ENCODE measurements at regions of chr1 and their contacts with region 1.

Region 1: DNA sequence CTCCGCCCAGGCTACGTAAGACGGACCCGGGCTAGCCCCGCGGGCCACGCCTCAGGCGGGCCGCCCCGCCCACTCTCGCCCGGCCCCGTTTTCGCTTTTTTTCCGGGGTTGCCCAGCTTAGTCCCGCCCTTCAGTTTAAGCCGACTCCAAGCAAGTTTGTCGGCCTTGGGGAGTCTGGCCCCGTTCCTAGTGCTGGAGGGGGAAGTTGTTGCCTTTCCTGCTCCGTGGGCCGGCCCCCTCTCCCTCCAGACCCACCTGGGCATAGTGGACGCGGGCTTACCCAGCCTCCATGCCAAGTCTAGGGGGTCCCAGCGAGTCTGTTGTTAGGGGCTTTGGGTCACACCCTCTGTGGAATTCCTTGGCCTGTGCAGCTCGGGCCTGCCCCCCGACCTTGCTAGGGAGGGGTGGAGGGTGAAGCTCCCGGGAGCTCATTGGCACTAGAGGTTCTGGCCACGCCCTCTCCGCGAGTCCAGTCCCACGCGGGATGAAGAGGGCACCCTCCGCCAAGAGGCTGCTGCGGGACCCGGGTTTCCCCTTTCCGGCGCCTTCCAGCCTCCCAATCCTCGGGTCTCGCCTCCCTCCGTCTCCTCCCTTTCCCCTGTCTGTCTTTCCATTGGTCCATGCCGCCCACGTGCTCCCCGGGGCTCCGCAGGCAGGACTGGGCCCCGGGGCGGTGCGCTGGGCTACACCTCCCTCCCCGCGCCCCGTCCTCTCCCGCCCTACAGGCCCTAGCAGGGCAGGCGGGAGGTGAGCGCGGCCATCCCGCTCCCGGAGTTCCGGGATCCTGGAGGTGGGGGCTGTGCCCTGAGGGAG is 3.3 kb downstream of the RUSC1 start:
- DNase-seq: peak; percentile 75 to 95 (median 80)
- ATAC-seq: peak; percentile 86
- H3K4me3 ChIP-seq: peak overlapping the region; percentile 100
- H3K4me3 Mint-ChIP-seq: peak overlapping the region; percentile 80 to 91 (median 89)
- H3K27ac ChIP-seq: peak overlapping the region; percentile 90
- H3K27ac Mint-ChIP-seq: peak overlapping the region; percentile 44 to 86 (median 73)
- H3K4me1 ChIP-seq: peaks cover 0 to 12% of the 10 kb centered on the region in 2 donors
- H3K4me1 Mint-ChIP-seq: peaks cover 24 to 38% (median 31%) of the 10 kb centered on the region in 7 donors
- H3K27me3 ChIP-seq: no peaks in the 10 kb centered on the region
- H3K27me3 Mint-ChIP-seq: no peaks in the 10 kb centered on the region

Region 2: DNA sequence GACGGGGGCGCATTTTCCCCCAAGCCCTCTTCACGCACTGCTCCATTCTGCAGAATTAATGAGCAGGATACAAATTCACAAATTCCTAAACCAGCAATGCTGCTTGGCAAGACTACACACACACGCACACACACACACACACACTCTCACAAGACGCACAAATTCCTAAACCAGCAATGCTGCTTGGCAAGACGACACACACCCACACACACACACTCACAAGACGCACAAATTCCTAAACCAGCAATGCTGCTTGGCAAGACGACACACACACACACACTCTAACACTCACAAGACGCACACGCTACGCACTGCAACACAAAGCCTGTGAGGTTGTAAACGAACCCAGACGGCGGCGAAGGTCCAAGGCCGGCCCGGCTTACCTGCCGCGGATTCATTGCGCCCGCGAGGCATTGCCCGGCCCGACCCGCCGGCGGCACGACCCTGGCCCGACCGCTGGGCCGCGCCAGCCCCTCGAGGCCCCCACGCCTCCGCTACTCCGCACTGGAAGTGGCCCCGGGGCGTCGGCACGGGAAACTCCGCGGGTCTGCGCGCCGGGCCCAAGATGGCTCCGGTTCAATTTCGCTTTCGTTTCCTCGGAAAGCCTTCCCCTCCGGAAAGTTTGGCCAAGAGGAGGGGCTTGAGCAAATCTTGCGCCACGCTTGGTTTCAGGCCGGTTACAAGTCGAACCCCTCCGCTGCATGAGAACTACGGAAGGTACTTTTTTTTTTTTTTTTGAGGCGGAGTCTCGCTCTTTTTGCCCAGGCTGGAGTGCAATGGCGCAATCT is 716.2 kb before region 1 on chr1 and contains the start of gene ADAR:
- CTCF ChIA-PET with region 1: no interaction called
- POLR2A ChIA-PET with region 1: no interaction called
- intact Hi-C with region 1: no loop called
- DNase-seq: peak; percentile 67 to 95 (median 90)
- ATAC-seq: peak; percentile 92
- H3K4me3 ChIP-seq: peak within 1 kb of the TSS; percentile 78
- H3K4me3 Mint-ChIP-seq: peak within 1 kb of the TSS; percentile 91 to 100 (median 98)
- H3K27ac ChIP-seq: peak within 1 kb of the TSS; percentile 97
- H3K27ac Mint-ChIP-seq: peak within 1 kb of the TSS; percentile 94 to 99 (median 99)
- H3K4me1 ChIP-seq: peaks cover 40 to 42% of the 10 kb centered on the region in 2 donors
- H3K4me1 Mint-ChIP-seq: peaks cover 63 to 90% (median 75%) of the 10 kb centered on the region in 7 donors
- H3K27me3 ChIP-seq: no peaks in the 10 kb centered on the region
- H3K27me3 Mint-ChIP-seq: no peaks in the 10 kb centered on the region
- total RNA-seq, gene ADAR: 206 to 408 (median 237) TPM

Region 3: DNA sequence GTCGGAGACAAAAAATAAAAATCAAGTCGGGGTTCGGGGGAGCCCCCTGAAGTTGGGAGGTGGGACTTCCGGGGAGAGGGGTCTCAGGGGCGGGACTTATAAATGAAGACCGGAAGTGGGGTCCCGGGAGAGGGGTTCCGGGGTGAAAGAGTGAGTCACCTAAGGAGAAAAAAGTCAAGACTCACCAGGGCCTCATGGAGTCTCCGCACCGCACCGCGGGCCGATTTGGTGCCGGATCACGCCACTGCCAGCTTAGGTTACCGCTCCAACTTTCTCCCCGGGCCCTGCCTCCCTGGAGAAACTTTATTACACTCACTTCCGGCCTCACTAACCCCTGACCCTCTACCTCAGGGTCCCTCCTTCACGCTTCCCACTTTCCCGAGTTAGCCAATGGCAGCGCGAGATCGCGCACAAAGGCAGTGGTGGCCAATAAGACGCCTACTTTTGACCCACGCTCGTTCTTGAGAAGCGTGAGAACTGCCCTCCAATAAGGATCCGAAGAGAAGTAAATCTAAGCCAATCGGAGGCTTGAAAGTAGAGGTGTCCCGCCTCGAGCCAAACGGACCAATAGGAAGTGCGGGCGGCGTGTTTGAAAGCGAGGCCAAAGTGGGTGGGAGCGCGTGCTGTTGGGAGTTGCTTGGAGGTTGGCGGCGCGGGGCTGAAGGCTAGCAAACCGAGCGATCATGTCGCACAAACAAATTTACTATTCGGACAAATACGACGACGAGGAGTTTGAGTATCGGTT is 349.8 kb before region 1 on chr1 and contains the start of gene CKS1B:
- CTCF ChIA-PET with region 1: no interaction called
- POLR2A ChIA-PET with region 1: no interaction called
- intact Hi-C with region 1: loop called in 1 of 2 experiments (anchors 10 kb)
- DNase-seq: peak; percentile 86 to 100 (median 98)
- ATAC-seq: peak; percentile 89
- H3K4me3 ChIP-seq: peak within 1 kb of the TSS; percentile 82
- H3K4me3 Mint-ChIP-seq: no peak within 1 kb of the TSS
- H3K27ac ChIP-seq: peak within 1 kb of the TSS; percentile 94
- H3K27ac Mint-ChIP-seq: no peak within 1 kb of the TSS
- H3K4me1 ChIP-seq: peaks cover 28 to 35% of the 10 kb centered on the region in 2 donors
- H3K4me1 Mint-ChIP-seq: peaks cover 27 to 39% (median 31%) of the 10 kb centered on the region in 7 donors
- H3K27me3 ChIP-seq: no peaks in the 10 kb centered on the region
- H3K27me3 Mint-ChIP-seq: no peaks in the 10 kb centered on the region
- total RNA-seq, gene CKS1B: 8.4 to 105 (median 10.2) TPM

Region 4: GRCh38 chr1:155172732-155173477 is 151.1 kb before region 1 on chr1 and contains the start of gene KRTCAP2:
- CTCF ChIA-PET with region 1: no interaction called
- POLR2A ChIA-PET with region 1: no interaction called
- intact Hi-C with region 1: loop called in 1 of 2 experiments (anchors 5 kb)
- DNase-seq: peak; percentile 89 to 93 (median 92)
- ATAC-seq: peak; percentile 91
- H3K4me3 ChIP-seq: peak within 1 kb of the TSS; percentile 90
- H3K4me3 Mint-ChIP-seq: peak within 1 kb of the TSS; percentile 94 to 100 (median 98)
- H3K27ac ChIP-seq: peak within 1 kb of the TSS; percentile 88
- H3K27ac Mint-ChIP-seq: peak within 1 kb of the TSS; percentile 95 to 99 (median 98)
- H3K4me1 ChIP-seq: peaks cover 11 to 18% of the 10 kb centered on the region in 2 donors
- H3K4me1 Mint-ChIP-seq: peaks cover 32 to 60% (median 47%) of the 10 kb centered on the region in 7 donors
- H3K27me3 ChIP-seq: no peaks in the 10 kb centered on the region
- H3K27me3 Mint-ChIP-seq: peaks cover 0 to 6% (median 0%) of the 10 kb centered on the region in 5 donors
- total RNA-seq, gene KRTCAP2: 97.4 to 236 (median 155) TPM

Region 5: GRCh38 chr1:155244368-155245162 is 79.4 kb before region 1 on chr1:
- CTCF ChIA-PET with region 1: interaction called, 105 read pairs
- POLR2A ChIA-PET with region 1: interaction called, 18 read pairs
- intact Hi-C with region 1: loop called in 1 of 2 experiments (anchors 1 kb)
- DNase-seq: peak; percentile 76 to 96 (median 94)
- ATAC-seq: peak; percentile 92
- H3K4me3 ChIP-seq: peak overlapping the region; percentile 63
- H3K4me3 Mint-ChIP-seq: peak overlapping the region; percentile 84 to 97 (median 91)
- H3K27ac ChIP-seq: peak overlapping the region; percentile 73
- H3K27ac Mint-ChIP-seq: peak overlapping the region; percentile 94 to 100 (median 98)
- H3K4me1 ChIP-seq: peaks cover 19 to 20% of the 10 kb centered on the region in 2 donors
- H3K4me1 Mint-ChIP-seq: peaks cover 31 to 50% (median 44%) of the 10 kb centered on the region in 7 donors
- H3K27me3 ChIP-seq: no peaks in the 10 kb centered on the region
- H3K27me3 Mint-ChIP-seq: peaks cover 0 to 6% (median 3%) of the 10 kb centered on the region in 5 donors

Region 6: DNA sequence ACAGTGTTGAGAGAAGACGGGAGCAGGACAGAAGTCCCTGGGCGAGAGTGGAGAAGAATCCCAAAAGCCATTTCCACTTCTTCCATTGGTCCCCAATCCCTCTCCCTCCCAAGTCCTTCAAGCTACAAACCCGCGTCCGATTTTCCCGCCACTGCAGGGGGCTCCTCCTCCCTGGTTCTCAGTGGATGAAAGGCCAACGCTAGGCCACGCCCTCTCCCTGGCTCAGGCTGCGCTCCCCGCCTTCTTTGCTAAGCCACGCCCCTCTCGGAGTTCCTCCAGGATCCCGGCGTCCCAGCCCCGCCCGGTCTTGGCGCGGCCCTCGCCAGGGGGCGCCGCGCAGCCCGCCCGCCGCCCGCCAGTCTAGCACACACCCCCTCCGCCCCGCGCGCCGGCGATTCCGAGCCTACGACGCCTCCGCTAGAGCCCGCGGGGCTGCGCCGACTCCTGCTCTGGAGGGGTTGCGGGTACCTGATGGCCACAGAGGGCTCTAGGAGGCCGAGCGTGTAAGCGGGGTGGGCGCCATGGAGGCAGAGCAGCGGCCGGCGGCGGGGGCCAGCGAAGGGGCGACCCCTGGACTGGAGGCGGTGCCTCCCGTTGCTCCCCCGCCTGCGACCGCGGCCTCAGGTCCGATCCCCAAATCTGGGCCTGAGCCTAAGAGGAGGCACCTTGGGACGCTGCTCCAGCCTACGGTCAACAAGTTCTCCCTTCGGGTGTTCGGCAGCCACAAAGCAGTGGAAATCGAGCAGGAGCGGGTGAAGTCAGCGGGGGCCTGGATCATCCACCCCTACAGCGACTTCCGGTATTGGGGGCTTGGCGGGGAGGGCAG is 46.7 kb before region 1 on chr1 and contains the start of gene HCN3:
- CTCF ChIA-PET with region 1: interaction called, 6 read pairs
- POLR2A ChIA-PET with region 1: interaction called, 11 read pairs
- intact Hi-C with region 1: loop called (anchors 1 kb)
- DNase-seq: peak; percentile 68 to 95 (median 70)
- ATAC-seq: peak; percentile 71
- H3K4me3 ChIP-seq: peak within 1 kb of the TSS; percentile 59
- H3K4me3 Mint-ChIP-seq: peak within 1 kb of the TSS; percentile 75 to 90 (median 86)
- H3K27ac ChIP-seq: peak within 1 kb of the TSS; percentile 36
- H3K27ac Mint-ChIP-seq: peak within 1 kb of the TSS in 8 of 9 donors; percentile 44 to 83 (median 69)
- H3K4me1 ChIP-seq: peaks cover 18 to 19% of the 10 kb centered on the region in 2 donors
- H3K4me1 Mint-ChIP-seq: peaks cover 24 to 47% (median 38%) of the 10 kb centered on the region in 7 donors
- H3K27me3 ChIP-seq: no peaks in the 10 kb centered on the region
- H3K27me3 Mint-ChIP-seq: peaks cover 0 to 11% (median 0%) of the 10 kb centered on the region in 5 donors
- total RNA-seq, gene HCN3: 1.6 to 3.3 (median 2.8) TPM

Region 7: GRCh38 chr1:155300553-155301329 is 23.3 kb before region 1 on chr1:
- CTCF ChIA-PET with region 1: no interaction called
- POLR2A ChIA-PET with region 1: no interaction called
- intact Hi-C with region 1: no loop called
- DNase-seq: no peak
- ATAC-seq: no peak
- H3K4me3 ChIP-seq: no peak overlapping the region
- H3K4me3 Mint-ChIP-seq: no peak overlapping the region
- H3K27ac ChIP-seq: no peak overlapping the region
- H3K27ac Mint-ChIP-seq: no peak overlapping the region
- H3K4me1 ChIP-seq: no peaks in the 10 kb centered on the region
- H3K4me1 Mint-ChIP-seq: peaks cover 0 to 9% (median 2%) of the 10 kb centered on the region in 7 donors
- H3K27me3 ChIP-seq: no peaks in the 10 kb centered on the region
- H3K27me3 Mint-ChIP-seq: peaks cover 15 to 30% (median 23%) of the 10 kb centered on the region in 5 donors

Region 8: DNA sequence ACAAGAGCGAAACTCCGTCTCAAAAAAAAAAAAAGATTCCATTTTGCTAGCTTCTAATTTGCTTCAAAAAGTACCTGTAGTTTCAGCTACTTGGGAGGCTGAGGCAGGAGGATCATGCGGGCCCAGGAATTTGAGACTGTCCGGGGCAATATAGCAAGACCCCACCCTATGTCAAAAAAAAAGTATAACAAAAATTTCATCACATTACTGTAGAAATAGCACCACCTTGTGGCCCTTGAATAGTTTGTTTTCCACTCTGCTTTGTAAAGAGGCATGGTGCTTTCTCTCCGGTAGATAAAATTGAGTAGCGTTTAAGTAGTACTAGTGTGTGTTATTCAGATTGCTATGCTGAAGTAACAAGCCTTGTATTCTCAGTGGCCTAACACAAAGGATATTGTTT is 267.8 kb after region 1 on chr1:
- CTCF ChIA-PET with region 1: no interaction called
- POLR2A ChIA-PET with region 1: no interaction called
- intact Hi-C with region 1: loop called in 1 of 2 experiments (anchors 5 kb)
- DNase-seq: peak in 7 of 9 donors; percentile 42 to 71 (median 57)
- ATAC-seq: peak; percentile 85
- H3K4me3 ChIP-seq: no peak overlapping the region
- H3K4me3 Mint-ChIP-seq: no peak overlapping the region
- H3K27ac ChIP-seq: no peak overlapping the region
- H3K27ac Mint-ChIP-seq: peak overlapping the region in 1 of 9 donors; percentile 62
- H3K4me1 ChIP-seq: no peaks in the 10 kb centered on the region
- H3K4me1 Mint-ChIP-seq: peaks cover 0 to 4% (median 3%) of the 10 kb centered on the region in 7 donors
- H3K27me3 ChIP-seq: no peaks in the 10 kb centered on the region
- H3K27me3 Mint-ChIP-seq: no peaks in the 10 kb centered on the region

Region 9: GRCh38 chr1:156338180-156338973 is 1014.4 kb after region 1 on chr1 and contains the starts of genes CCT3 and TSACC:
- CTCF ChIA-PET with region 1: no interaction called
- POLR2A ChIA-PET with region 1: no interaction called
- intact Hi-C with region 1: loop called in 1 of 2 experiments (anchors 2 kb)
- DNase-seq: peak; percentile 99 to 100 (median 100)
- ATAC-seq: peak; percentile 97
- H3K4me3 ChIP-seq: peak within 1 kb of the TSS; percentile 83
- H3K4me3 Mint-ChIP-seq: peak within 1 kb of the TSS; percentile 97 to 99 (median 99)
- H3K27ac ChIP-seq: peak within 1 kb of the TSS; percentile 76
- H3K27ac Mint-ChIP-seq: peak within 1 kb of the TSS; percentile 97 to 99 (median 98)
- H3K4me1 ChIP-seq: peaks cover 11 to 17% of the 10 kb centered on the region in 2 donors
- H3K4me1 Mint-ChIP-seq: peaks cover 16 to 49% (median 40%) of the 10 kb centered on the region in 7 donors
- H3K27me3 ChIP-seq: no peaks in the 10 kb centered on the region
- H3K27me3 Mint-ChIP-seq: peaks cover 0 to 12% (median 0%) of the 10 kb centered on the region in 5 donors
- total RNA-seq, gene CCT3: 78.0 to 282 (median 114) TPM
- total RNA-seq, gene TSACC: 1.1 TPM in 1 of 5 experiments, not detected in the others

Measured in naive thymus-derived CD4-positive, alpha-beta T cell (primary cell).